Caco-2 (cell line): ENCODE measurements at regions of chr11 and their contacts with region 1.

Region 1: DNA sequence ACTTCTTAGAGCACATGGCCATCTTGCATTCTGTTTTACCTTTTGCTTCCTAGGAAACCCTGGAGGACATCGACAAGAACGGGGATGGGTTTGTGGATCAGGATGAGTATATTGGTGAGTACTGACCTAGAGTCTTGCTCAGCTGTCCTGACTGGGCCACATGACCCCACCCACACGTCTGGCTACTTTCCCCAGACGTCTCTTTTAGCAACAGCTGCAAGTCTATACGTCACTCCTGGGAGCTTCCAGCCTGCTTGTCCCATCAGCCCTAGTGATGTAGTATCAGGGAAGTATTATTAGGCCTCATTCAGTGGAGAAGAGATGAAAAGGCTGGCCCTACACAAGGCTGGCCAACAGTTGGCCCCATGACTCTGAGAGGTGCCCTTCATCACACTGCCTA is 9.6 kb downstream of the RCN1 start:
- DNase-seq: no peak
- H3K4me3 ChIP-seq: no peak overlapping the region
- H3K4me3 Mint-ChIP-seq: no peak overlapping the region
- H3K27ac Mint-ChIP-seq: no peak overlapping the region
- H3K4me1 ChIP-seq: peaks cover 16% of the 10 kb centered on the region; the same call in 1 of the 2 replicates
- H3K4me1 Mint-ChIP-seq: peaks cover 12% of the 10 kb centered on the region
- H3K27me3 ChIP-seq: no peaks in the 10 kb centered on the region
- H3K27me3 Mint-ChIP-seq: no peaks in the 10 kb centered on the region
- CTCF ChIP-seq: no peak

Region 2: DNA sequence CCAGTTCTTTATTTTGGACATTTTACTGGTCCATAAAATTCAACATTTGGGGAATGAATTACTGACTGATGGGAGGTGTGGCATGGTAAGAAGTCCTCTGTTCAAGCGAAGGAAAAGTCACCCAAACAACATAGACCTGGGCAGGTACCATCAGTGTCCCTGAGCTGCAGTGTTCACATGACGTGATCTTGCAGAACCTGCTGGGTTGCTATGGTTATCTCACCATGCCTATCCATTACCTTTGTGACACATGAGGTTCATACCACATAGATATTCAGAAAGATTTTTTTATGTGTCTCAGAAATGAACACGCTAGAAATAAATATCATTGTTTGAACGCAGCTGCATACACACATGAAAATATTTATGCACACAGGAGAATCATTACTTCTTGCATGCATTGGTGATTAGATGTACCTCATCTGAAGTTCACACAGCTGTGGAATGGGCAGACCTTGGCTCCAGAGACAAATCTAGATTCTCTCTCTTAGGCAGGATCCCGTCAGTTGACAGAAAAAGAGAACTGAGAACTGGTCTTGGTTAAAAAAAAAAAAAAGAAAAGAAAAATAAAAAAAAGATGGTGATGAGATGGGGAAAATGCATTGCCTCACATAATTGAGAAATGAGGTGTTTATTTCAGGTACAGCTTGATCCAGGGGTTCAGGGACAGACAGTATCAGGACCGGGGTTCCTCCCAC is 31.0 kb before region 1 on chr11:
- CTCF ChIA-PET with region 1: no interaction called
- POLR2A ChIA-PET with region 1: no interaction called
- intact Hi-C with region 1: loop called (anchors 5 kb)
- DNase-seq: no peak
- H3K4me3 ChIP-seq: no peak overlapping the region
- H3K4me3 Mint-ChIP-seq: no peak overlapping the region
- H3K27ac Mint-ChIP-seq: no peak overlapping the region
- H3K4me1 ChIP-seq: peaks cover 19% of the 10 kb centered on the region
- H3K4me1 Mint-ChIP-seq: peaks cover 21% of the 10 kb centered on the region
- H3K27me3 ChIP-seq: 0 out of 2 replicates have a peak, but pooled peaks cover 1% of the 10 kb centered on the region
- H3K27me3 Mint-ChIP-seq: peaks cover 4% of the 10 kb centered on the region
- CTCF ChIP-seq: no peak

Region 3: GRCh38 chr11:32079553-32079952 is 20.9 kb before region 1 on chr11:
- CTCF ChIA-PET with region 1: no interaction called
- POLR2A ChIA-PET with region 1: no interaction called
- intact Hi-C with region 1: no loop called
- DNase-seq: no peak
- H3K4me3 ChIP-seq: no peak overlapping the region
- H3K4me3 Mint-ChIP-seq: no peak overlapping the region
- H3K27ac Mint-ChIP-seq: no peak overlapping the region
- H3K4me1 ChIP-seq: no peaks in the 10 kb centered on the region
- H3K4me1 Mint-ChIP-seq: no peaks in the 10 kb centered on the region
- H3K27me3 ChIP-seq: no peaks in the 10 kb centered on the region
- H3K27me3 Mint-ChIP-seq: peaks cover 7% of the 10 kb centered on the region
- CTCF ChIP-seq: no peak

Region 4: GRCh38 chr11:32148236-32148635 is 47.7 kb after region 1 on chr11:
- CTCF ChIA-PET with region 1: no interaction called
- POLR2A ChIA-PET with region 1: no interaction called
- intact Hi-C with region 1: no loop called
- DNase-seq: no peak
- H3K4me3 ChIP-seq: no peak overlapping the region
- H3K4me3 Mint-ChIP-seq: no peak overlapping the region
- H3K27ac Mint-ChIP-seq: no peak overlapping the region
- H3K4me1 ChIP-seq: no peaks in the 10 kb centered on the region
- H3K4me1 Mint-ChIP-seq: peaks cover 5% of the 10 kb centered on the region
- H3K27me3 ChIP-seq: no peaks in the 10 kb centered on the region
- H3K27me3 Mint-ChIP-seq: peaks cover 17% of the 10 kb centered on the region
- CTCF ChIP-seq: no peak

Region 5: DNA sequence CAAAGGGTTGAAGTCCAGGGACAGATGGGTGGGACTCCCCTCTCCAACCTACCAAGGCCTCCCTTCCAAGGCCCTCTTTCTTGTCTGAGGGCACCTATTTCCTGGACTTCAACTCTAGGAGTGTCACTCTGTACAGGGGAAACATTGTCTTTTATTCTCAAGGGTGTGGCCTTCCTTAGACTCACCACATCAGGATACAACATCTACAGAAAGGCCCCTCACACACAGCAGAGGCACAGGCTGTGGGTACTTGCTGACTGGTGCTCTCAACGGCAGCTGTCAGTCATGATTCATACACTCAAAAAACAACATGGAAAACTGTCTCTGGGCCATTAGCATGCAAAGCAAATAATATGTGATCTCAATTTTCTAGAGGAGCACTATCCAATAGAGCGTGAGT is 68.4 kb after region 1 on chr11:
- CTCF ChIA-PET with region 1: no interaction called
- POLR2A ChIA-PET with region 1: no interaction called
- intact Hi-C with region 1: no loop called
- DNase-seq: no peak
- H3K4me3 ChIP-seq: no peak overlapping the region
- H3K4me3 Mint-ChIP-seq: no peak overlapping the region
- H3K27ac Mint-ChIP-seq: no peak overlapping the region
- H3K4me1 ChIP-seq: no peaks in the 10 kb centered on the region
- H3K4me1 Mint-ChIP-seq: no peaks in the 10 kb centered on the region
- H3K27me3 ChIP-seq: no peaks in the 10 kb centered on the region; the same call in 1 of the 2 replicates
- H3K27me3 Mint-ChIP-seq: peaks cover 23% of the 10 kb centered on the region
- CTCF ChIP-seq: no peak

Region 6: GRCh38 chr11:32244453-32244852 is 144.0 kb after region 1 on chr11:
- CTCF ChIA-PET with region 1: no interaction called
- POLR2A ChIA-PET with region 1: no interaction called
- intact Hi-C with region 1: no loop called
- DNase-seq: no peak
- H3K4me3 ChIP-seq: no peak overlapping the region
- H3K4me3 Mint-ChIP-seq: no peak overlapping the region
- H3K27ac Mint-ChIP-seq: no peak overlapping the region
- H3K4me1 ChIP-seq: no peaks in the 10 kb centered on the region
- H3K4me1 Mint-ChIP-seq: no peaks in the 10 kb centered on the region
- H3K27me3 ChIP-seq: no peaks in the 10 kb centered on the region
- H3K27me3 Mint-ChIP-seq: peaks cover 6% of the 10 kb centered on the region
- CTCF ChIP-seq: no peak